ENCODE measurements at regions of chr6 and their contacts with region 1.

Region 1: GRCh38 chr6:63571881-63572732 is at the starts of genes LOC128125822 and PTP4A1:
- DNase-seq: peak; percentile 92 to 98 (median 94)
- ATAC-seq: peak; percentile 96
- H3K4me3 ChIP-seq: peak within 1 kb of the TSS; percentile 94
- H3K27ac ChIP-seq: peak within 1 kb of the TSS; percentile 97
- H3K4me1 ChIP-seq: peaks cover 7 to 11% of the 10 kb centered on the region in 2 experiments; a peak in 3 of 5 replicates
- H3K27me3 ChIP-seq: no peaks in the 10 kb centered on the region
- CTCF ChIP-seq: no peak
- EP300 ChIP-seq: peak; percentile 50
- POLR2A ChIP-seq: peak; percentile 93
- RAD21 ChIP-seq: no peak
- polyA plus RNA-seq, gene PTP4A1: 3.7 to 13.6 TPM

Region 2: GRCh38 chr6:63372951-63373533 is 199.1 kb before region 1 on chr6:
- CTCF ChIA-PET with region 1: no interaction called
- POLR2A ChIA-PET with region 1: no interaction called
- in situ Hi-C with region 1: no loop called
- intact Hi-C with region 1: no loop called
- DNase-seq: no peak
- ATAC-seq: no peak
- H3K4me3 ChIP-seq: no peak overlapping the region
- H3K27ac ChIP-seq: no peak overlapping the region
- H3K4me1 ChIP-seq: no peaks in the 10 kb centered on the region
- H3K27me3 ChIP-seq: no peaks in the 10 kb centered on the region
- CTCF ChIP-seq: no peak
- EP300 ChIP-seq: no peak
- POLR2A ChIP-seq: no peak
- RAD21 ChIP-seq: no peak

Region 3: DNA sequence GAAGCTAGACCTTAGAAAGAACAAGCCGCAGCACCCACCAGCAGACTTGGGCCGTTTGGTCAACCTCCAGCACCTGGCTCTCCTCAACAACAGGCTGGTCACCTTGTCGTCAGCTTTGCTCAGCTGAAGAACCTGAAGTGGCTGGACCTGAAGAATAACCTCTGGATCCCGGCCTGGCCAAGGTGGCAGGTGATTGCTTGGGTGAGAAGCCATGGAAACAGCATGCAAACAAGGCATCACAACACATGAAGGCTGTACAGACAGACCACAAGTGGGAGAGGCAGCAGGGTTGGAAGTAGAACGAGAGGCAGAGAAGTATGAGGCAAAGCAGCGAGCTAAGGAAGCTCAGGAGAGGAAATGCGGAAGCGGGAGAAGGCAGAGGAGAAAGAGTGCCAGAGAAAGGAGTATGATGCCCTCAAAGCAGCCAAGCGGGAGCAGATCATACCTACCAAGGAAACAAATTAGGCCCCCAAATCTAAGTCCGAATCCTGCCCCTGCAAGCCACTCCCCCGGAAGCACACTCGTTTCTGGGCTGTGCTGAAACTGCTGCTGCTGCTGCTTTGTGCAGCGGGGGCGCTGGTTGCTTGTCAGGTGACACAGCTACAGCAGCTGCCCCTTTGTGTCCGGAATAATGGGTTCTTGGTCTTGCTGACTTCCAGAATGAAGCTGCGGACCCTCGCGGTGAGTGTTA is 130.7 kb before region 1 on chr6:
- CTCF ChIA-PET with region 1: no interaction called
- POLR2A ChIA-PET with region 1: no interaction called
- in situ Hi-C with region 1: no loop called
- intact Hi-C with region 1: loop called (anchors 10 kb)
- DNase-seq: peak; percentile 13 to 48 (median 16)
- ATAC-seq: peak; percentile 96
- H3K4me3 ChIP-seq: peak overlapping the region; percentile 20
- H3K27ac ChIP-seq: no peak overlapping the region
- H3K4me1 ChIP-seq: no peaks in the 10 kb centered on the region; a peak in 1 of 5 replicates
- H3K27me3 ChIP-seq: no peaks in the 10 kb centered on the region
- CTCF ChIP-seq: peak in 1 of 3 experiments; percentile 11; a peak in 1 of 6 replicates
- EP300 ChIP-seq: no peak
- POLR2A ChIP-seq: no peak
- RAD21 ChIP-seq: no peak

Region 4: DNA sequence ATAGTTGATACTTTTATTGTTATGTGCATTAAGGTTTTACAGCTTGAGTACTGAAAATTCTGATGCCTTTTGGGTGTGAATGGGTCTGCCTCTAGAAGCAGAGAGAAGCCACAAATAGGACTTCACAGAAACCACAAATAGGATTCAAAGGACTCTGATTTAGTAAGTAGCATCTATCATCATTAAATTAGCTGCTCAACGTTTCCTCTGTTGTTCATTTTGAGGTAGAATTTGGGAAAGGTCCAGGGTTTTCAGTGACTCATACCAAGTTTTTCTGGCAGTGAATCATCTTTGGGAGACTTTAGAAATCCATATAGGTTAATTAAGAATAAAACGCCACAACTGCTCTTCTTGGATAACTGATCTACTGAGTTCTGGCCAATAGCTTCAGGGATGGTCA is 168.6 kb after region 1 on chr6:
- CTCF ChIA-PET with region 1: no interaction called
- POLR2A ChIA-PET with region 1: no interaction called
- in situ Hi-C with region 1: no loop called
- intact Hi-C with region 1: no loop called
- DNase-seq: no peak
- ATAC-seq: no peak
- H3K4me3 ChIP-seq: no peak overlapping the region
- H3K27ac ChIP-seq: no peak overlapping the region
- H3K4me1 ChIP-seq: no peaks in the 10 kb centered on the region
- H3K27me3 ChIP-seq: no peaks in the 10 kb centered on the region
- CTCF ChIP-seq: no peak
- EP300 ChIP-seq: no peak
- POLR2A ChIP-seq: no peak
- RAD21 ChIP-seq: no peak